ENCODE measurements at regions of chr14 and their contacts with region 1.

Region 1: GRCh38 chr14:22448905-22449599 is 140.0 kb downstream of the DAD1 start:
- DNase-seq: peak; percentile 50
- ATAC-seq: peak; percentile 71
- H3K4me3 ChIP-seq: no peak overlapping the region
- H3K27ac ChIP-seq: peak overlapping the region; percentile 47
- H3K4me1 ChIP-seq: peaks cover 17% of the 10 kb centered on the region
- H3K27me3 ChIP-seq: no peaks in the 10 kb centered on the region
- CTCF ChIP-seq: no peak

Region 2: GRCh38 chr14:22412926-22413411 is 36.1 kb before region 1 on chr14:
- CTCF ChIA-PET with region 1: no interaction called
- POLR2A ChIA-PET with region 1: no interaction called
- intact Hi-C with region 1: loop called (anchors 5 kb)
- DNase-seq: no peak
- ATAC-seq: no peak
- H3K4me3 ChIP-seq: no peak overlapping the region
- H3K27ac ChIP-seq: no peak overlapping the region
- H3K4me1 ChIP-seq: no peaks in the 10 kb centered on the region
- H3K27me3 ChIP-seq: no peaks in the 10 kb centered on the region
- CTCF ChIP-seq: no peak

Region 3: GRCh38 chr14:22589096-22589839 is 140.2 kb after region 1 on chr14 and contains the start of gene DAD1:
- CTCF ChIA-PET with region 1: no interaction called
- POLR2A ChIA-PET with region 1: interaction called, 42 read pairs
- intact Hi-C with region 1: no loop called
- DNase-seq: peak; percentile 99
- ATAC-seq: peak; percentile 97
- H3K4me3 ChIP-seq: peak within 1 kb of the TSS; percentile 80
- H3K27ac ChIP-seq: peak within 1 kb of the TSS; percentile 75
- H3K4me1 ChIP-seq: peaks cover 25% of the 10 kb centered on the region
- H3K27me3 ChIP-seq: no peaks in the 10 kb centered on the region
- CTCF ChIP-seq: no peak
- total RNA-seq, gene DAD1: 228 and 258 TPM in 2 replicates